Activated CD4-positive, alpha-beta T cell treated with anti-CD3 and anti-CD28 coated beads for 36 hours (primary cell): ENCODE measurements at regions of chr9 and their contacts with region 1.

Region 1: DNA sequence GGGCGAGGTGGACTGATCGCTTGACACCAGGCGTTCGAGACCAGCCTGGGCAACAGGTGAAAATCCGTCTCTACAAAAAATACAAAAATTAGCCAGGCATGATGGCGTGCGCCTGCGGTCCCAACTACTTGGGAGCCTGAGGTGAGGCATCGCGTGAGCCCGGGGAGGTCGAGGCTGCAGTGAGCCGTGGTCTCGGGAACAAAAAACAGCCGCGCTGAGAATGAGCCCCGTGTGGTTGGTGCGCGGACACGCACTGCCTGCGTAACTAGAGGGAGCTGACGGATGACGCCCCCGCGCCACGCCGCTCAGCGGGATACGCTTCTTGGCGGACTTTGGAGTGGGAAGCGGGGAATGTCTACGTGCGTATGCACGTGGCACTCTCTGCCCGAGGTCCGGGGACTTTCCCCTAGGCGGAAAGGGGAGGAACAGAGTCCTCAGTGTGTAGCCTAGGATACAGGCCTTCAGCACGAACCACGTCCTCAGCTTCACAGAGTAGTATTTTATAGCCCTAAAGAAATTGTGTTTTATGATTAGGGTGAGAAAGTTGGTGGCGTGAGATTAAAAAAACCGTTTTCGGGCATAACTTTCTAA is at the start of gene RMRP:
- DNase-seq: peak; percentile 97
- ATAC-seq: peak; percentile 95
- H3K4me3 Mint-ChIP-seq: peak within 1 kb of the TSS; percentile 80
- H3K27ac Mint-ChIP-seq: peak within 1 kb of the TSS; percentile 98
- H3K4me1 Mint-ChIP-seq: peaks cover 64% of the 10 kb centered on the region
- H3K27me3 Mint-ChIP-seq: peaks cover 2% of the 10 kb centered on the region
- total RNA-seq, gene RMRP: 894 to 11,462 TPM

Region 2: GRCh38 chr9:34139477-34140146 is 1518.0 kb before region 1 on chr9:
- CTCF ChIA-PET with region 1: no interaction called
- POLR2A ChIA-PET with region 1: no interaction called
- intact Hi-C with region 1: no loop called
- DNase-seq: no peak
- ATAC-seq: no peak
- H3K4me3 Mint-ChIP-seq: no peak overlapping the region
- H3K27ac Mint-ChIP-seq: no peak overlapping the region
- H3K4me1 Mint-ChIP-seq: peaks cover 2% of the 10 kb centered on the region
- H3K27me3 Mint-ChIP-seq: no peaks in the 10 kb centered on the region

Region 3: GRCh38 chr9:35071814-35072460 is 585.7 kb before region 1 on chr9:
- CTCF ChIA-PET with region 1: no interaction called
- POLR2A ChIA-PET with region 1: no interaction called
- intact Hi-C with region 1: loop called in 1 of 2 experiments (anchors 5 kb)
- DNase-seq: peak; percentile 83
- ATAC-seq: peak; percentile 47
- H3K4me3 Mint-ChIP-seq: peak overlapping the region; percentile 91
- H3K27ac Mint-ChIP-seq: peak overlapping the region; percentile 95
- H3K4me1 Mint-ChIP-seq: peaks cover 56% of the 10 kb centered on the region
- H3K27me3 Mint-ChIP-seq: no peaks in the 10 kb centered on the region

Region 4: DNA sequence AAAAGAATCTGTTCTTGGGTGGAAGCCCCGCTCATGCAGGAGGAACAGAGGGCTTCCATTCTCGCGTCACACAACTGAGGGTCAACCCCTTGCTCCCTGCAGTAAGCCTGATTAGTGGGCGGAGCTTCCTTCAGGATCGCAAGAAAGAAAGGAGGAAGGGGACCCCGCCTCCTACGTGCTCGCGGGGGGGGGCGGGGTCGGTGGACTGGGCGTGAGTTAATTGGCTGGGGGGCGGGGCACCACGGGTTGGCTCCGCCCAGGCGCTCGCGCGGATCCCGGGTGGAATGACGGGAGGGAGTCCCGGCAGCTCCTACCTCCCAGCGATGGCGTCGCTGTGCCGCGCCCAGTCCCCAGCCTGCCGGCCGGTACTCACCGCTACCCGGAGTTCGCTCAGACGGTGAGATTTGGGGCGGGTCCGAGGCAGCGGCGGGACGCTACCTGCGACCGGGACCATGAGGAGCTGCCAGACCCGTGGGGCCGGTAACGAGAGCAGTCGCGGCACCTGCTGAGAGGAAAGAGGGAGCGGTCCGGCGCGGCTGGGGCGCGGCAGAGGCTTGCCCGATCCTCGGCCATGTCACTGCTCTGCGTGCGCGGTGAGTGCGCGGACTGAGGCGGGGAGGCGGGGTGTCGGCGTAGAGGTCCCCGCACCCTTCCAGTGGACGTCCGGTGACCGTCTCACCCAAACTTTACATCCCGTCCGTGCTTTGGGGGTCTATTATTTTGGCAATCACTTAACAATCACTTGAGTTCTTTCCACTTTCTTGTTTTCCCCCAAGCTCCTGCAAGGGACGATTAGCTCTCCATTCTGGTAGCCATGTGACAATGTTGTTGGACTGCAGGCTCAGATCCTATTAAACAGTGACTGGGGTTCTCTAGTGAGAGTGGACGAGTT is 495.7 kb before region 1 on chr9 and contains the start of gene UNC13B:
- CTCF ChIA-PET with region 1: no interaction called
- POLR2A ChIA-PET with region 1: no interaction called
- intact Hi-C with region 1: loop called in 1 of 2 experiments (anchors 1 kb)
- DNase-seq: peak; percentile 85
- ATAC-seq: peak; percentile 93
- H3K4me3 Mint-ChIP-seq: peak within 1 kb of the TSS; percentile 84
- H3K27ac Mint-ChIP-seq: peak within 1 kb of the TSS; percentile 4
- H3K4me1 Mint-ChIP-seq: peaks cover 22% of the 10 kb centered on the region
- H3K27me3 Mint-ChIP-seq: no peaks in the 10 kb centered on the region
- total RNA-seq, gene UNC13B: 2.7 to 4.0 TPM

Region 5: DNA sequence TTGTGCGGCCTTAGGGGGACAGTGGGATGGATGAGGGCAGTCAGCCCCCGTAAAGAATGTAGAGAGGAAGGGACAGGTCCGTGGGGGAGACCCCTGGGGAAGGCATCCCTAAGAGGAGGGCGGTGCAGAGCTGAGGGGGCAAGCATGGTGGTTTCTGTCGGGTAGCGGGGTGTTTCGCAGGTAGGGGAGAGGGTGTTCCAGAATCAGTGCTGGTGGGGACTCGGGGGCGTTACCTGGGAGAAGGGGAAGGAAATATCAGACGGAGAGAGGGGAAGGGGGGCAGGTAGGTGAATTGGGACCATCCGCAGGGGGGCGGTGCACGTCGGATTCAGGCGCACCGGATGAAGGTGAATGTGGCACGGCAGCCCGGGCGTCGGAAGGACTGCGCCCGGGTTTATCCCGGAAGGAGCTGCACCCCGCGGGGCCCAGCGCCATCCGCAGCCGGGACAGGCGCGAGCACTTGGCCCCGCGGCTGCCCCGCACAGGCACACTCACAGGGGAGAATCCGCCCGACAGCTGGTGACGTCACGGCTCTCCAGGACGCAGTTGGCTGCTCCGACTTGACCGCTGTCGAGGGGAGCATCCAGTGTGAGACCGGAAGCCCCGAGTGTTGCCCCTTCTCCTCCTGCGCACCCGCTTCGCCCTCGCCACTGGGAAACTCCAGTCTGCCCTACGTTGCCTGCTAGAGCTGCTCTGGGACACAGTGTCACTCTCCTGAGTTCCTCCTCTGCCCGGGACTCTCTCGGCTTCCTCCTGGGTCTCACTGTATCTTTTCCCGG is 40.8 kb before region 1 on chr9:
- CTCF ChIA-PET with region 1: interaction called, 24 read pairs
- POLR2A ChIA-PET with region 1: no interaction called
- intact Hi-C with region 1: loop called (anchors 1 to 5 kb)
- DNase-seq: peak; percentile 80
- ATAC-seq: peak; percentile 74
- H3K4me3 Mint-ChIP-seq: peak overlapping the region; percentile 77
- H3K27ac Mint-ChIP-seq: peak overlapping the region; percentile 79
- H3K4me1 Mint-ChIP-seq: peaks cover 38% of the 10 kb centered on the region
- H3K27me3 Mint-ChIP-seq: no peaks in the 10 kb centered on the region

Region 6: GRCh38 chr9:35646533-35647265 is 10.9 kb before region 1 on chr9:
- CTCF ChIA-PET with region 1: interaction called, 89 read pairs
- POLR2A ChIA-PET with region 1: interaction called, 3 read pairs
- intact Hi-C with region 1: loop called (anchors 1 kb)
- DNase-seq: peak; percentile 96
- ATAC-seq: peak; percentile 84
- H3K4me3 Mint-ChIP-seq: peak overlapping the region; percentile 91
- H3K27ac Mint-ChIP-seq: peak overlapping the region; percentile 97
- H3K4me1 Mint-ChIP-seq: peaks cover 51% of the 10 kb centered on the region
- H3K27me3 Mint-ChIP-seq: no peaks in the 10 kb centered on the region

Region 7: DNA sequence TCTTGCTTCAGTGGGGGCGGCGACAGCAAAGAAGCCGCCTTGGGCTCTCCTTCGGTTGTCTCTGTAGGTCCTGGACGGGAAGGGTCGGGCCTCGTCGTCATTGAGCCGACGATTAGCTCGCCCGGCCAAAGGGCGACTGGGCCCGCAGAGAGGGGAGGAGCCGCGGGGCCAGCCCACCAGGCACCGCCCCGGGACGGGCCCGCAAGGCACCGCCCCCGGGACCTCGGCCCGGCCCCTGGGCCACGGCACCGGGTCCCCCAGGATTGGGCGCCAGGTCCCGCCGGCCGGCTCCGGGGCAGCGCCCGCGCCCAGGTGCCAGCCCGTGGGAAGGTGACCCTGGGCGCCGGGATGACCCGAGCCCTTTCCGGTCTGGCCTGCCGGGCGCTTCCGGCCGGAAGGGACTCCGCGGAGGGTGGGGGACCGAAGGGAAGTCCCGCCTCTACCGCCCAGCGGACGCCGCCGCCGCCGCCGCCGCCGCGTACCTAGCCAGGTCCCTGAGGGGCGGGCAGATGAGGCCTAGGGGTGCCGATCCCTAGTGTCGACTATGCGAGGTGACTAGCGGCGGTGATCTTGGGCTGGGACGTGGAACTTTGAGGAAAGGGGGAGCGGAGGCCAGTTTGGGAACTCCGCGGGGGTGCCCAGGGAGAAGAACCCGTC is 91.3 kb after region 1 on chr9 and contains the starts of genes GBA2 and RGP1:
- CTCF ChIA-PET with region 1: interaction called, 4 read pairs
- POLR2A ChIA-PET with region 1: no interaction called
- intact Hi-C with region 1: loop called (anchors 2 to 5 kb)
- DNase-seq: peak; percentile 83
- ATAC-seq: peak; percentile 79
- H3K4me3 Mint-ChIP-seq: peak within 1 kb of the TSS; percentile 93
- H3K27ac Mint-ChIP-seq: peak within 1 kb of the TSS; percentile 88
- H3K4me1 Mint-ChIP-seq: peaks cover 40% of the 10 kb centered on the region
- H3K27me3 Mint-ChIP-seq: no peaks in the 10 kb centered on the region
- total RNA-seq, gene GBA2: 19.6 to 23.7 TPM
- total RNA-seq, gene RGP1: 14.0 to 15.5 TPM

Region 8: GRCh38 chr9:36190388-36191287 is 533.0 kb after region 1 on chr9 and contains the start of gene CLTA:
- CTCF ChIA-PET with region 1: no interaction called
- POLR2A ChIA-PET with region 1: no interaction called
- intact Hi-C with region 1: loop called in 1 of 2 experiments (anchors 5 kb)
- DNase-seq: peak; percentile 96
- ATAC-seq: peak; percentile 99
- H3K4me3 Mint-ChIP-seq: peak within 1 kb of the TSS; percentile 95
- H3K27ac Mint-ChIP-seq: peak within 1 kb of the TSS; percentile 88
- H3K4me1 Mint-ChIP-seq: peaks cover 45% of the 10 kb centered on the region
- H3K27me3 Mint-ChIP-seq: no peaks in the 10 kb centered on the region
- total RNA-seq, gene CLTA: 123 to 133 TPM

Region 9: GRCh38 chr9:37119907-37120842 is 1462.5 kb after region 1 on chr9 and contains the start of gene ZCCHC7:
- CTCF ChIA-PET with region 1: no interaction called
- POLR2A ChIA-PET with region 1: no interaction called
- intact Hi-C with region 1: no loop called
- DNase-seq: peak; percentile 98
- ATAC-seq: peak; percentile 98
- H3K4me3 Mint-ChIP-seq: peak within 1 kb of the TSS; percentile 80
- H3K27ac Mint-ChIP-seq: peak within 1 kb of the TSS; percentile 96
- H3K4me1 Mint-ChIP-seq: peaks cover 31% of the 10 kb centered on the region
- H3K27me3 Mint-ChIP-seq: no peaks in the 10 kb centered on the region
- total RNA-seq, gene ZCCHC7: 29.9 to 50.2 TPM